ENCODE measurements at regions of chr1 and their contacts with region 1.

Region 1: DNA sequence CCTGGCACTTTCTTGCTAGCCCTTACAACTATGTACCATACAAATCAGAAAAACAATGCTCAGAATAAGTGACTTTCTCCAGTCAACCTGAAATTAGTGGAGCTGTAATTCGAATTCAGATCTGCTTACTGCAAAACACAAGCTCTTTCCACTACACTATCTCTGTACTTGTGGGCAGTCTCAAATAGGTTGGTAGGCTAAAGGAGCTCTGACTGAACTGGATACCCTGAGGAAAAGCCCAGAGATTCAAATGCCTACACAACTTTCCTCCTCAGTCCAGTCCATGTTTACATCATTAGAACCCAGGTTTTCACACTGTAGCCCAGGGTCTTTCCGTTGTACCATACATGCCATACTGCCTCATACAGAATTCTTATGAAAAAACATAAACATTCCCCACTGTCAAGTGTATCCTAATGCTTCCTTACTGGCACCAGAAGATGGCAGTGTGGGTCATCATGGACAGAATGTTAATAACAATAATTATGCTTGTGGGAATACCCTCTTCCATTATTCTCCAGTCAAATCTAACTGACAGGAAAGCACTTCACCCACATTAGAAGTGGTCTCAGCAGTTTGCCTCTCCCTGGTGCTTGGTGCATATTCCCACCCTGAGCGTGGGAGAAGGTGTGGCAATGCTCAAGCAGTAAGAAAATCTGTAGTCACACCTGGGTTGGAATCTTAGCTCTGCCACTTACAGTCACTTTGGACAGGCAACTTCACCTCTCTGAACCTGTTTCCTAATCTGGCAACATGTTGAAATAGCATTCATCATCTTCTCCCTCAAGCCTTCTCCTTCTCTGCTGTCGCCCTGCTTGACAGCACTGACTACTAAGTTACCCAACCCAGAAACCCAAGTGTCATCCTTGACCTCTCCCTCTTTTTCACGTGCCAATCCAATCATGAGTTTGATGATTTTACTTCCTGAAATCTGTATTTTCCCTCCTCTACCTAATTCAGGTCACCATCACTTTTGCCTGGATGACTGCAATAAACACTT is 14.4 kb upstream of the ZFYVE9 start:
- DNase-seq: peak; percentile 62
- H3K4me3 ChIP-seq: no peak overlapping the region
- H3K27ac ChIP-seq: no peak overlapping the region
- H3K4me1 ChIP-seq: no peaks in the 10 kb centered on the region
- H3K27me3 ChIP-seq: no peaks in the 10 kb centered on the region
- CTCF ChIP-seq: peak; percentile 87
- EP300 ChIP-seq: no peak
- RAD21 ChIP-seq: peak; percentile 90

Region 2: GRCh38 chr1:52102336-52103013 is 25.0 kb before region 1 on chr1:
- CTCF ChIA-PET with region 1: no interaction called
- POLR2A ChIA-PET with region 1: no interaction called
- DNase-seq: no peak
- H3K4me3 ChIP-seq: no peak overlapping the region
- H3K27ac ChIP-seq: no peak overlapping the region
- H3K4me1 ChIP-seq: no peaks in the 10 kb centered on the region
- H3K27me3 ChIP-seq: no peaks in the 10 kb centered on the region
- CTCF ChIP-seq: no peak
- EP300 ChIP-seq: no peak
- RAD21 ChIP-seq: no peak

Region 3: DNA sequence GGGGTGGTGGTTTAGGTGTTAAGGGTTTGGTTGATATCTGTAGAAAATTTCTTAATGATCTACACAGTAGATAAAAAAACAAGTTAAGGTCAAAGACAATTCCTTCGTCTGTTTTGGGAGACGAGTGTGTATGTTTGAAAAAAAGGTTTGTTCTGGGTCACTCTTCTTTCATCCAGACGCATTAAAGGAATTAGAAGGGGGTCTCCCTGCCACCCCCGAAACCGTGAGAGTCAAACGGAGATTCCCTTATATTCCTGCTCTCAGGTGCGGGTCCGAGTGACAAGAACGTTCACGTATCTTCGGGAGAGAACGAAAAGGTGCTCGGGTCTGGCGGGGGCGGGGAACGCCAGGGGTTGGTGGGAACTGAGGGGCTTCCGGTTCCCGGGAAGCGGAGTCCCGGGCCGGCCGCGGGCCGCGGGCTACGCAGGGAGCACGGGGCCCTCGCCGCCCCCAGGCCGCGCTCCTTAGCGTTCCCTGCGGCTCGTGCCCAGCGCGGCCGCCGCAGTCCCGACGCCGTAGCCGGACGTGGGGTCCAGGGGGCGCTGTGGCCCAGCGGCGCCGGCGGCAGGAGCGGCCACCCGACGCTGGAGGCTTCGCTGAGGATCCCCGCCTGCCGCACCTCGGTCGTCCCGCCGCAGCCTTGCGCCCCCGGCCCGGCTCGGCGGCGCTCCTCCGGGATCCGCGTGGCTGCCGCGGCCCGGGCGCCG is 14.2 kb after region 1 on chr1 and contains the start of gene ZFYVE9:
- CTCF ChIA-PET with region 1: interaction called, 16 read pairs
- POLR2A ChIA-PET with region 1: no interaction called
- DNase-seq: peak; percentile 94
- H3K4me3 ChIP-seq: peak within 1 kb of the TSS; percentile 83 to 90
- H3K27ac ChIP-seq: peak within 1 kb of the TSS; percentile 86 to 89
- H3K4me1 ChIP-seq: peaks cover 4 to 19% of the 10 kb centered on the region in 2 experiments
- H3K27me3 ChIP-seq: no peaks in the 10 kb centered on the region
- CTCF ChIP-seq: peak; percentile 49
- EP300 ChIP-seq: no peak
- RAD21 ChIP-seq: peak; percentile 57
- polyA plus RNA-seq, gene ZFYVE9: 4.1 and 5.4 TPM in 2 replicates

Region 4: DNA sequence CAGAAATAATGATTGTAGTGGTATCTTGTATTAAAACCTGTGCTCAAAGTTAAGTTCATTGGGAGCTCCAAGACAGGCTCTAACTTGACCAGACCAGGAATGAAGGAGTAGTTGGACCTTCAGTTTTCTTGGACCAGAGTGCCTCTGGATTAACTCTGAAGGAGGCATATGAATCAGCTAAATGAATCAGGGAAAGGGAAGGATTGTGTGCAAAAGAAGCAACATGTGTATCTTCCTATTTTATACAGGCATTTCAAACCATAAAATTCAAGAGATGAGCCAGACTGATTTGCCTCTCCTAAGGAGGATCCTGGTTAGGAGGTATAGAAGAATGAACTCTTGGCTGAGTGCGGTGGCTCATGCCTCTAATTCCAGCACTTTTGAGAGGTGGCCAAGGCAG is 167.1 kb after region 1 on chr1:
- CTCF ChIA-PET with region 1: interaction called, 13 read pairs
- POLR2A ChIA-PET with region 1: no interaction called
- DNase-seq: no peak
- H3K4me3 ChIP-seq: no peak overlapping the region
- H3K27ac ChIP-seq: no peak overlapping the region
- H3K4me1 ChIP-seq: no peaks in the 10 kb centered on the region
- H3K27me3 ChIP-seq: no peaks in the 10 kb centered on the region
- CTCF ChIP-seq: no peak
- EP300 ChIP-seq: no peak
- RAD21 ChIP-seq: no peak

Measured in SK-N-SH (cell line).